Panc1 (cell line): ENCODE measurements at regions of chr4 and their contacts with region 1.

Region 1: DNA sequence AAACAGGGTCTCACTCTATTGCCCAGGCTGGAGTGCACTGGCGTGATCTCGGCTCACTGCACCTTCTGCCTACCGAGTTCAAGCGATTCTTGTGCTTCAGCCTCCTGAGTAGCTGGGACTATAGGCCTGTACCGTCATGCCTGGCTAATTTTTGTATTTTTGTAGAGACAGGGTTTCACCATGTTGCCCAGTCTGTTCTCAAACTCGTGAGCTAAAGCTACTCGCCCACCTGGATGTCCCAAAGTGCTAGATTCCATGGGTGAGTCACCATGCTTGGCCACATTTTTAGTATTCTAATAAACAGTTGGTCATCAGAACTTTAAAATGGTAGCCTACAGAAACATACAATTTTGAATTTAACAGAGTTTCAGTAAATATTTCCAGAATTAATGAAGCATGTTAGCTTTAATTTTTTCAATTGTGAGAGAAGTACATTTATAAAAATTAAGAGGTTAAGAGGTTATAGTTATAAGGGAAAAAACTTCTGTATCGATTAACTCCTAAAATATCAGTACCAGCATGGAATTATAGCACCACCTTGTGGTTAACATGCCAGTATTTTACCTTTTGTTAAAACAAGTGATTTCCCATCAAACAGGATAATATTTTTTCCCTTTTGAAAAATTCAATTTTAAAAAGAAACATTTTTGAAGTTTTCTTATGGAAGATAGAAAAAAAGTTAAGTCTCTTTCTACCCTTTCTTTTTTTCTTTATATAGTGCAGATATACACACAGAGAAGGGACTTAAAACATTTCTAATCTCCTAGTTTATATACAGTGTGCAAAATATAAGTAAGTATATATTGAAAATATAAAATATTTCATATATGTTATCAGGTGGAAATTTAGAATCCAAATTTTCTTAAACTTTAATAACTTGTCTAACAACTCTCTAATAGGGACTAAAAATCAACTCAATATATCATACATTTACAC is 35.4 kb downstream of the CEP44 start:
- DNase-seq: peak; percentile 10
- ATAC-seq: no peak
- H3K4me3 ChIP-seq: no peak overlapping the region
- H3K27ac ChIP-seq: no peak overlapping the region
- H3K4me1 ChIP-seq: no peaks in the 10 kb centered on the region
- H3K27me3 ChIP-seq: no peaks in the 10 kb centered on the region
- CTCF ChIP-seq: peak; percentile 37; the same call in 1 of the 2 replicates

Region 2: GRCh38 chr4:174156239-174156826 is 162.8 kb before region 1 on chr4:
- CTCF ChIA-PET with region 1: no interaction called
- POLR2A ChIA-PET with region 1: no interaction called
- in situ Hi-C with region 1: no loop called
- intact Hi-C with region 1: loop called (anchors 10 kb)
- DNase-seq: peak; percentile 61
- ATAC-seq: peak; percentile 73; the same call in 1 of the 2 replicates
- H3K4me3 ChIP-seq: no peak overlapping the region
- H3K27ac ChIP-seq: no peak overlapping the region
- H3K4me1 ChIP-seq: no peaks in the 10 kb centered on the region
- H3K27me3 ChIP-seq: no peaks in the 10 kb centered on the region
- CTCF ChIP-seq: peak; percentile 69; the same call in 1 of the 2 replicates

Region 3: GRCh38 chr4:174193438-174194374 is 125.4 kb before region 1 on chr4:
- CTCF ChIA-PET with region 1: no interaction called
- POLR2A ChIA-PET with region 1: no interaction called
- in situ Hi-C with region 1: no loop called
- intact Hi-C with region 1: no loop called
- DNase-seq: no peak
- ATAC-seq: no peak
- H3K4me3 ChIP-seq: no peak overlapping the region
- H3K27ac ChIP-seq: no peak overlapping the region
- H3K4me1 ChIP-seq: no peaks in the 10 kb centered on the region
- H3K27me3 ChIP-seq: no peaks in the 10 kb centered on the region
- CTCF ChIP-seq: no peak

Region 4: GRCh38 chr4:174222266-174222872 is 96.7 kb before region 1 on chr4:
- CTCF ChIA-PET with region 1: no interaction called
- POLR2A ChIA-PET with region 1: no interaction called
- in situ Hi-C with region 1: no loop called
- intact Hi-C with region 1: loop called (anchors 5 kb)
- DNase-seq: no peak
- ATAC-seq: peak; percentile 78; the same call in 1 of the 2 replicates
- H3K4me3 ChIP-seq: no peak overlapping the region
- H3K27ac ChIP-seq: no peak overlapping the region
- H3K4me1 ChIP-seq: no peaks in the 10 kb centered on the region
- H3K27me3 ChIP-seq: no peaks in the 10 kb centered on the region
- CTCF ChIP-seq: peak; percentile 67